Tibial artery (tissue), 4 donors: ENCODE measurements at regions of chr4 and their contacts with region 1.

Region 1: DNA sequence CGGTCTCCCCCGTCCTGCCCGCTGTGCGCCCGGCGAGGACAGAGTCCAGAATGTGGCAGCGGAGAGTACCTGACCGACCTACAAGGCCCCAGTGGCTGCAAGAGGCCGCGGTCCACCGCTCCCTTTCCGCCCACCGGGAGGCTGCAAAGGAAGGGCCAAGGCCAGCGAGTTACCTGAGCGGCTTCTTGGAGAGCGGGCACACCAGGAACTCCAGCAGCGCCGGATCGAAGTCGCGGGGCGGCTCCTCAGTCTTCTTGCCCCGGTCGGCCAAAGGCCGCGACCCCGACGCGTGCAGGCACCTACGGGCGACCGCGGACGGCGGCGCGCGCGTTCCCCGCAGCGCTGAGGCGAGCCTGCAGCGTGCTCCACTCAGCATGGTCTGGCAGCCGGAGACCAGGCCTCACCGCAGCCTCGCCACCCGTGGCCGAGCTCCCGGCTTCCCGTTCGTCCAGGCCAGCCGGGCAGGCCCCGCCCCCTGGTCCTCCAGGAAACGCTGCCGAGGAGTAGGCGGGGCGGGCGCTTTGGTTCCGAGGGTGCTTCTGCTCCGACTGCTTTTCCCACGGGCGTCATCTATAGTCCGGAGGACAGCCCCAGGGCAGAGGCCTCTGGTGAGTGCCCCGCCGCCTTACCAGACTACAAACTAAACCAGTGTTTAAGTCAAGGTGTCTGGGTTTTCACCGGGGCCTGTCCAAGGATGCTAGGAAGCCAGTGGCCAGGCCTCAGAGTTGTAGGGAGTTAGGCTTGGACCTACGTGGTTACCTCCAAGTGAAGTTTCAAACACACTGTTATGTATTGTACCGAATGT is at the start of gene PYURF:
- DNase-seq: peak; percentile 98
- H3K4me3 ChIP-seq: peak within 1 kb of the TSS; percentile 77 to 86
- H3K27ac ChIP-seq: peak within 1 kb of the TSS; percentile 83 to 91
- H3K4me1 ChIP-seq: peaks cover 0 to 31% (median 20%) of the 10 kb centered on the region in 4 donors
- H3K27me3 ChIP-seq: no peaks in the 10 kb centered on the region
- CTCF ChIP-seq: no peak

Region 2: GRCh38 chr4:88591787-88592599 is 68.5 kb after region 1 on chr4 and contains the start of gene HERC3:
- intact Hi-C with region 1: loop called (anchors 5 kb)
- DNase-seq: peak; percentile 89 to 96
- H3K4me3 ChIP-seq: peak within 1 kb of the TSS; percentile 74 to 82
- H3K27ac ChIP-seq: peak within 1 kb of the TSS; percentile 96 to 97
- H3K4me1 ChIP-seq: peaks cover 0 to 19% (median 6%) of the 10 kb centered on the region in 4 donors
- H3K27me3 ChIP-seq: no peaks in the 10 kb centered on the region
- CTCF ChIP-seq: peak in 1 of 2 experiments; percentile 26

Region 3: GRCh38 chr4:88659055-88659889 is 135.7 kb after region 1 on chr4:
- intact Hi-C with region 1: loop called (anchors 5 kb)
- DNase-seq: peak; percentile 43 to 70
- H3K4me3 ChIP-seq: no peak overlapping the region
- H3K27ac ChIP-seq: peak overlapping the region in 1 of 2 donors; percentile 19
- H3K4me1 ChIP-seq: peaks cover 0 to 12% (median 3%) of the 10 kb centered on the region in 4 donors
- H3K27me3 ChIP-seq: no peaks in the 10 kb centered on the region
- CTCF ChIP-seq: peak; percentile 74 to 84